ENCODE measurements at regions of chr1 and their contacts with region 1.

Region 1: DNA sequence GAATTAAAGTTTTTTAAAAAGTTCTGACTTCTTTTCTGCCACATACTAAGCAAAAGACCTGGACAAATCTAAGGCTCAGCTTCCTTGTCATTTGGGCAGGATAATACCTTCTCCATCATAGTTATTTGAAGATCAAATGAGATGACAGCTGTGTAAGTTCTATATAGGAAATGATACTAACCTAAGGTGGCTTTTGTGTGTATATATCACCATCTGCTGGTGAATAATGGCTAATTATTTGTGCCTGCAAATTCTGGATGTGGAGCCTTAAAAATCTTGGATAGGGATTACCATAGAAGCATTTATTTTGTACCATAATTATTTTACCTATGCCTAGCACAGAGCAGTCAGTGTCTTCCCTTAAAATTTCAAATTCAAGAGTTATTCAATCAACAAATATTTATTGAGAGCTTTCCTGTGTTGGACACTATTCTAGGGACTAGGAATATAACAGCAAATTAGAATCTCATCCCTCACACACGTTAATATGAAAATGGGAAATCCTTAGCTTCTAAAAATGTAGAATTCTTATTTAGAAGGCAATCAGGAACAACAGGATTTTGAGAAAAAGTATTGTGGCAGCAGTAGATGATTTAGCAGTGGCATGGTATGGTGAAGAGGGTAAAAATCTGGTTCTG is 89.8 kb downstream of the TMEM200B start:
- DNase-seq: no peak

Region 2: GRCh38 chr1:28789412-28789811 is 244.5 kb before region 1 on chr1:
- intact Hi-C with region 1: loop called (anchors 5 kb)
- DNase-seq: peak in 2 of 10 donors; percentile 10 to 17

Region 3: DNA sequence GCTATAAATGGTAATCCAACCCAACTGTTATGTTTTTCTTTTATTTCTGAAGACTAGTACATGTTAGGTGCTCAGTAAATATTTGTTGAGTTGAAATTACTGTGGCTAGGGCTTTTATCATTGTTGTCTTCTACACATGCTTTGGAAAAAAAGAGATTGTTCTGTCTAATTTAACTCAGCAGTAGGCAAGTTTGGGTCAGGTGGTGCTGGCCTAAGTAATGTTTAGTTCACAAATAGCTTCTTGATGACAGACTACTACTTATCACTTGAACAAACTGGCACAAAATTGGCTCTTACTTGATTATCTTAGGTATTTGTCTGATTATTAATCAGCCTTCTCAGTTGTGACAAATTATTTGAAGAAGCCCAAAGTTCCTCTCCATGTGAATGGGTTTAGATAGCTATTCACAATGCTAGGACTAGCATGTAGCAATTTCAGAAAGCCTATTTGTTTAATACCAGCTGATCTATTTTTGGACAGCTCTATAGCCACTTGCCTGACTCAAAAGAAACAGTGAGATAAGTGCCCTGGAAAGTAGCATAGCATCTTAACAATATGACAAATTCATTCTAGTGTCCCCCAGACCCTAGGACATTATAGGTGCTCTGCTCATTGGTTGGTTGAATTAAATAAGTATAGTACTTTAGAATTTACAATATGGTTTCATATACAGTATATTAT is 57.1 kb after region 1 on chr1:
- intact Hi-C with region 1: no loop called
- DNase-seq: no peak

Region 4: DNA sequence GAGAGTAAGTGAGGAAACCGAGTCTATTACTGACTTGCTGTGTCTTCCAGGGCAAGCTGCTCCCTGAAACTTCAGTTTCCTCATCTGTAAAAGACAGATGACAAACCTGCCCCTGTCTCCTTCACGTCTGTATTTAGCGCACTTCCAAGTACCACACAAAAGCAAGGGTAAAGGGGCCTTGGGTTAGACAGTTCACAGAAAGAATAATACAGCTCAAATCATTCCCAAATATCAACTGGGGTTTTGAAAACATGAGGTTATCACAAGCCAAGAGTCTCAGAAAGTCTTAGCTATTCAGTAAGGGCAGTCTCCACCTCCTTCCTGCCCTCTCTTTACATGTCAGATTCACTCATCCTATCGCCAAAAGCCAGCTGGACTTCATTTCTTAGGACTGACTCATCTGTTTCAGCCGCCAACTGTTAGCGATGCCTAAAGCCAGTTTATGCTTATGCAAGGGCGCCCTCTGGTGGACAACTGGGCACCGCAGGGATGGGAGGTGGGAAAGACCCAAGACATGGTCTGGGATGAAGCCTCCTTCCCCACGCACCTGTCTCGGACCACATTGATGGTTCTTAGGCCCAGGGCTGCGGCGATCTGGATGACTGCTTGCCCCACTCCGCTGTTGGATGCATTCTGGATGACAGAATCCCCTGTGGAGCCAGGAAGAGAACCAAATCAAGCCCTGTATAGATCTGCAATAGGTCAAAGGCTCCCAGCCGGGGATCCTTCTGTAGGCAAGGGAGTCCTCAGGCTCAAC is 168.8 kb after region 1 on chr1:
- intact Hi-C with region 1: loop called (anchors 2 kb)
- DNase-seq: peak; percentile 78 to 99 (median 96)

Region 5: GRCh38 chr1:29436181-29436785 is 402.3 kb after region 1 on chr1:
- intact Hi-C with region 1: no loop called
- DNase-seq: no peak

Region 6: DNA sequence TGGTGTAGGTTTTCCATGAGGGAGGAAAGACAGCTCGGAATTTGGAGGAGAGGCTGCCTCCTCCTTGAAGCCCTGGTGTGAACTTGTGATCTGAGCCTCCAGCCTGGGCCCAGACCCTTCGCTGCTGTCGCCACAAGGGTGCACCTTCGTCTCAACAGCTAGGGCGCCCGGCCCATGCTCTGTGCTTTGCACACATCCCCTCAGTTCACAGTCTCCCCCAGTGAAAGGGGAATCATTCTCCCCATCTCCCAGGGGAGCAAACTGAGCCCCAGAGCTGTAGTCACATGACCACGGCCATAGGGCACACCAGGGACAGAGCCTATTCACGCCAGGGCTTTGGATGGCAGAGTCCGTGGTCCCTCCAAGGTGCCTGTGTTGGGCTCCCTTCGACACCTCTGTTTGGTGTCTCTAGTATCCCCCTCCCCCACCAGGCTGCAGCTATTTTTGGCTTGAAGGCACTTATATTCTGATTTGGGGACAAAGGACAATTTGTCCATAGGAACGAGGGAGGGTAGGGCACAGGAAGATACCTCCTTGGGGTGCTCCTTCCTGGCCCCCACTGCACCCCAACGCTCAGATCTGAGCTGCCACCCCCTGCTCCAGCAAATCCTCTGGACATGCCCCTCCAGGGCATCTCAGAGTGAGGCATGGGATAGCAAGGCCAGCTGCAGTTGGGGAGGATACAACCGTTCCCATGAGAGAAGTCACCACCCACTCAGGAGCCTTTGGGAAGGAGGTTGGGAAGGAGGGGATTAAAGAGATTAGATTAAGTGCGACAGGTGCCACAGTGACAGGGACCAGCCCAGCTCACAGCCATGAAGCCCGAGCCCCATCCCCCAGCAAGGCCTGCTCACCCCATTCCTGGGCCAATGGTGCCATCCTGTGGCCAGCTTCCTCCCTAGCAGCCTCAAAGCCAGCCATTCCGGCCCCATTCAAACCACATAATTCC is 1673.7 kb after region 1 on chr1:
- intact Hi-C with region 1: loop called (anchors 10 kb)
- DNase-seq: peak; percentile 73 to 99 (median 88)

Measured in posterior cingulate gyrus (tissue), 11 donors.